ENCODE measurements at regions of chr7 and their contacts with region 1.

Region 1: DNA sequence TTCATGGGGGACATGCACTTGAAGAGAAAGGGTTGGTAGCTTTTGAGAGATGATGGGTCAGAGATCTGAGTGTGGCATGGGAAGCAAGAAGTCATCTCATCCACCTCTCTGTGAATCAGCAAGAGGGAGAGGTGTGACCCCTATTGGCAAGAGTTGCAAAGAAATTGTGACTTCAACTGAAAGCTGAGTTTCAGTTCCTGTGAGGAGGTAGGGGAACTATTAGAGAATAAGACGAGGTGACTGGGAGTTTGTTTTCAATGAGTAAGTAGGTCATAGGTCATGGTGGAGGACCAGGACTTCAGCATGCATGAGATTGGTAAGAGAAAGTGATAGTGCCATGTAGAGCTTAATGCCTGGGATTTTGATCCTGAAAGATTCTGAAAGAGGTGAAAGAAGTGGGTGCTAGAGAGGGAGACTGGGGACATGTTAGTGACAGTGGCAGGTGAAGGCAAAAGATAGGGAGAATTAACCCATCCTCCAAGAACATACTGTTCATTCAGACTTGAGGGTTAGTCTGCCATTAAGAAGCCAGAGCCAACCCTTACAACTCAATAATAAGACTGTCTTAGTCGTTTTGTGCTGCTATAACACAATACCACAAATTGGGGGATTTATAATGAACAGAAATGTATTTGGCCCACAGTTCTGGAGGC is 75.5 kb upstream of the CAPZA2 start:
- DNase-seq: peak; percentile 47
- ATAC-seq: peak; percentile 83
- H3K4me3 ChIP-seq: no peak overlapping the region
- H3K27ac ChIP-seq: no peak overlapping the region
- H3K4me1 ChIP-seq: peaks cover 35% of the 10 kb centered on the region
- H3K27me3 ChIP-seq: no peaks in the 10 kb centered on the region
- CTCF ChIP-seq: peak; percentile 65
- EP300 ChIP-seq: no peak
- POLR2A ChIP-seq: no peak
- RAD21 ChIP-seq: no peak

Region 2: DNA sequence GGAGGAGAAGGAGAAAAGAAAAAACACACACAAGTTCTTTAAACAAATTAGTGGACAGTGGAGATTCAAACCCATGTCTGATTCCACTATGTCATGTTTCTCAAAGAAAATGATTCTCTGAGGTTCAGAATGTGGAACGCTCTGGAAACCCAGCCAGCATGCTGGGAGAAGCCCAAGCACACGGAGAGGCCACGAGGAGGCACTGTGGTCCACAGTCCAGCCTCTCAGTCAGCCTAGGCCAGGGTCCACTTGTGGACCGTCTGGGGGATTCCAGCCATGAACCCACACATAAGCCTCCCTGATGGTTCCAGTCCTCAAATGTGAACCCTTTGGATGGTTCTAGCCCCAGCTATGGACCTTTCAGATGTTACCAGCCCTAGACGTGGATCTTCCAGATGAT is 188.6 kb before region 1 on chr7:
- CTCF ChIA-PET with region 1: no interaction called
- POLR2A ChIA-PET with region 1: no interaction called
- in situ Hi-C with region 1: no loop called
- intact Hi-C with region 1: loop called (anchors 5 kb)
- DNase-seq: no peak
- ATAC-seq: peak; percentile 97
- H3K4me3 ChIP-seq: no peak overlapping the region
- H3K27ac ChIP-seq: no peak overlapping the region
- H3K4me1 ChIP-seq: peaks cover 31% of the 10 kb centered on the region
- H3K27me3 ChIP-seq: no peaks in the 10 kb centered on the region
- CTCF ChIP-seq: peak; percentile 83
- EP300 ChIP-seq: no peak
- POLR2A ChIP-seq: no peak
- RAD21 ChIP-seq: peak; percentile 39; the same call in 1 of the 2 replicates

Measured in HepG2 (cell line).